ENCODE measurements at regions of chr2 and their contacts with region 1.

Region 1: GRCh38 chr2:86221066-86221684 is 21.9 kb downstream of the MRPL35 start:
- DNase-seq: peak; percentile 68
- H3K4me3 ChIP-seq: no peak overlapping the region
- H3K27ac ChIP-seq: no peak overlapping the region
- H3K4me1 ChIP-seq: peaks cover 7% of the 10 kb centered on the region
- H3K27me3 ChIP-seq: no peaks in the 10 kb centered on the region
- CTCF ChIP-seq: peak; percentile 85 to 92
- POLR2A ChIP-seq: no peak

Region 2: GRCh38 chr2:86017901-86018896 is 203.0 kb before region 1 on chr2:
- CTCF ChIA-PET with region 1: no interaction called
- POLR2A ChIA-PET with region 1: no interaction called
- dilution Hi-C with region 1: no loop called
- intact Hi-C with region 1: no loop called
- DNase-seq: peak; percentile 66
- H3K4me3 ChIP-seq: no peak overlapping the region
- H3K27ac ChIP-seq: no peak overlapping the region
- H3K4me1 ChIP-seq: peaks cover 15% of the 10 kb centered on the region
- H3K27me3 ChIP-seq: no peaks in the 10 kb centered on the region
- CTCF ChIP-seq: no peak
- POLR2A ChIP-seq: no peak

Region 3: DNA sequence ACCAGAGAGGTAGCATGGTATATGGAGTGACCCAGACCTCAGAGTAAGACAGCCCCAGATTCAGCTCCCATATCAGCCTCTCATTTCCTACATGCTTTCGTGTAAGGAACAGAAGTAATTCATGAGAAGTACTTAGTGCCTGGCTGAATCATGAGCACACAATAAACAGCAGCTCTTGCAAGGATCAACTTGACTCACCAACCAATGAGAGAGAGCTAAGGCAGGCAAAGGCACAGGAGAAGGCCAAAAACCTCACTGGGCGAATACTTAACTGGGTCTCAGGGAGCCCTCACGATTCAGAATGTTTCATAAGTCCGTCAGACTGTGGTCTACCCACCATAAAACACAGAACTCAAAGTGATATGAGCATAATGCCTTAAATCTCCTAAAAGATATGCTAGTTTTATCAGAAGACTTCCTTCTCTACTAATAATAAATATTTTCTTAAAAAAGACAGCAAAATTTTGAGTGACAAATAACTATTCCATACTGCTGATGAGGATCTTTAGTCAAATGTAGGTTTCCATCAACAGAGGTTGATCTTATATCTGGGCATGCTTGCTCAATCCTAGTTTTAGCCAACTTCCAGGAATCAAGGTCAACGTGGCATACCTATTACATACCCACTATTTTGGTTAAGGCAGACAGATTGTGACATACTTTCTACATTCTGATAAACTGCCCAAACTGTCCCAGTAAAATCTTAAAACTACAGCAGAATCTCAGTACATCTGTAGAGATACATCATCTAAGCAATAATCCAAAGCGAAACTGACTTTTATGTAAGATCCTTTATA is 60.8 kb before region 1 on chr2:
- CTCF ChIA-PET with region 1: no interaction called
- POLR2A ChIA-PET with region 1: no interaction called
- dilution Hi-C with region 1: no loop called
- intact Hi-C with region 1: no loop called
- DNase-seq: no peak
- H3K4me3 ChIP-seq: no peak overlapping the region
- H3K27ac ChIP-seq: no peak overlapping the region
- H3K4me1 ChIP-seq: no peaks in the 10 kb centered on the region
- H3K27me3 ChIP-seq: no peaks in the 10 kb centered on the region
- CTCF ChIP-seq: no peak
- POLR2A ChIP-seq: no peak

Region 4: DNA sequence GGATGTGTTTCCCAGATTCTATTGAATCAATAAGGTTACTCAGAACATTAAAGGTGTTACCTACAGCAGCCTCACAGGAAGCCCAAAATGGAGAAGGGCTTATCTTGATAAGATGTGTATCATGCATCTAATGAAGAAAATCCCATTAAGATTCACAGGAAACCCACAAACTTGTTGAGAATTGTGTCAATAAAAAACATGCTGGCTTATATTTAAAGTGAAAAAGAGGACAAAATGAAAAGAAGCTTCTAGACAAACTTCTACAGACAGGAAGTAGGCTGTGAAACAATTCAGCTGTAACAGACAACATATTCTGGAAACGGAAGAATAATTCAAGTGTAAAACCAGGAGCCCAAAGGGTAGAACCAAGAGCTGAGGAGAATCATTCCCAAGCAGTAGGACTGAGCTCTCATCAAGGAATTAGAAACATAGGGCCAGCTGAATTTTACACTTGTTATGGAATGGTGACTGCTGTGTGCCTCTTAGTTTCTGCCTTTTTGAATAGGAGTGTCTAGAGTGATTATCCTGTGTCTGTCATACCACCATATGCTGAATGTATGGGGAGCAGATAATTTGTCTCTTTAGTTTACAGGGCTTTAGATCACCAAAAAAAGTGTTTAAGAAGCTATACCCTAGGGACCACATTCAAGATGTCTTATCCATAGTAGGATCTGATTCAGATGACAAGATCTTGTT is 35.5 kb before region 1 on chr2:
- CTCF ChIA-PET with region 1: no interaction called
- POLR2A ChIA-PET with region 1: no interaction called
- dilution Hi-C with region 1: no loop called
- intact Hi-C with region 1: no loop called
- DNase-seq: peak; percentile 16
- H3K4me3 ChIP-seq: no peak overlapping the region
- H3K27ac ChIP-seq: no peak overlapping the region
- H3K4me1 ChIP-seq: peaks cover 13% of the 10 kb centered on the region
- H3K27me3 ChIP-seq: no peaks in the 10 kb centered on the region
- CTCF ChIP-seq: no peak
- POLR2A ChIP-seq: no peak

Region 5: GRCh38 chr2:86201671-86202335 is 19.4 kb before region 1 on chr2:
- CTCF ChIA-PET with region 1: interaction called, 11 read pairs
- POLR2A ChIA-PET with region 1: no interaction called
- dilution Hi-C with region 1: no loop called
- intact Hi-C with region 1: no loop called
- DNase-seq: peak; percentile 42
- H3K4me3 ChIP-seq: no peak overlapping the region
- H3K27ac ChIP-seq: no peak overlapping the region
- H3K4me1 ChIP-seq: peaks cover 11% of the 10 kb centered on the region
- H3K27me3 ChIP-seq: no peaks in the 10 kb centered on the region
- CTCF ChIP-seq: no peak
- POLR2A ChIP-seq: no peak

Region 6: GRCh38 chr2:86233436-86233835 is 12.3 kb after region 1 on chr2:
- CTCF ChIA-PET with region 1: interaction called, 10 read pairs
- POLR2A ChIA-PET with region 1: no interaction called
- dilution Hi-C with region 1: no loop called
- intact Hi-C with region 1: no loop called
- DNase-seq: no peak
- H3K4me3 ChIP-seq: no peak overlapping the region
- H3K27ac ChIP-seq: no peak overlapping the region
- H3K4me1 ChIP-seq: no peaks in the 10 kb centered on the region
- H3K27me3 ChIP-seq: no peaks in the 10 kb centered on the region
- CTCF ChIP-seq: no peak
- POLR2A ChIP-seq: no peak

Region 7: DNA sequence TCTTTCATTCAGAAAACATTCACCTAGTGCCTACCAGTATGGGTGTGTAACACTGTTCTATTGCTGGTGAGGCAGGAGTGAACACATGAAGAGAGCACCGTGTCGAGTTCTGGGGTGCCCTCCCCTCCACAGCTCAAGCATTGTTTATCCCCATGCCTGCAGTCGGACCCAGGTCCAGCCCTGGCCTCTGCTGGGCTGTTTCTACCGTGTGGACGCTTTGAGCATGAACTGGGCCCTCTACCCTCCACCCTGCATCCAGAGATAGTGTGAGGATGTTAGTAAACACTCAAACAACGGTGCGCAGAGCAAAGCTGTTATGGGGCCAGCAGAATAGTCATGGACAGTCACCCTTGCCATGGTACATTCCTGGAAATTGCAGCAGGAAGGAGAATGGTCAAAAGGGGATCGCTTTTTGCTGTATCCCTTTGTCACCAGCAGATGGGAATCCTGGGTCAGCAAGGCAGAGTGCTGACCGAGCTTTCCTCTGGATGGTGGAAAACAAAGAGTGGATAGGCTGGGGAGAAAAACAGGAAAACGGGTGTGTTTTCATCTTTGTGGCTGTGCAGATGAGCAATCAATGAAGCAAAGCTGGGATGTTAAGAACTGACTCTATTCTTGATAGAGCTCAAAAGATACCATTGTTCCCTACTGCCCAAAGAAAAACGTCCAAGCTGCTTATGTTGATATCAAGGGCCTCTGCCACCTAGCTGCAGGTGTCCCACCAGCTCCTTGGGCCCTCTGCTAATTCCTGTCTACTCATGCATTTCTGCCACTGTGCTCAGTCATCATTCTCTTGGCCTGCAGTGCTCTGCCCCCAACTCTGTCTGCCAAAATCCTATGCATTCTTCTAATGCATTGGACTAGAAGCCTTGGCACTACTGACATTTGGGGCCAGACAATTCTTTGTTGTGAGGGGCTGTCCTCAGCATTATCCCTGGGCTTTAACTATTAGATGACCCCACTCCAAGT is 77.5 kb after region 1 on chr2:
- CTCF ChIA-PET with region 1: interaction called, 18 read pairs
- POLR2A ChIA-PET with region 1: no interaction called
- dilution Hi-C with region 1: no loop called
- intact Hi-C with region 1: loop called (anchors 5 kb)
- DNase-seq: peak; percentile 74
- H3K4me3 ChIP-seq: no peak overlapping the region
- H3K27ac ChIP-seq: no peak overlapping the region
- H3K4me1 ChIP-seq: no peaks in the 10 kb centered on the region
- H3K27me3 ChIP-seq: peaks cover 2 to 11% of the 10 kb centered on the region in 2 experiments
- CTCF ChIP-seq: peak in 1 of 2 donors; percentile 20
- POLR2A ChIP-seq: no peak

Measured in endothelial cell of umbilical vein (primary cell).